PC-9 (cell line): ENCODE measurements at regions of chr5 and their contacts with region 1.

Region 1: DNA sequence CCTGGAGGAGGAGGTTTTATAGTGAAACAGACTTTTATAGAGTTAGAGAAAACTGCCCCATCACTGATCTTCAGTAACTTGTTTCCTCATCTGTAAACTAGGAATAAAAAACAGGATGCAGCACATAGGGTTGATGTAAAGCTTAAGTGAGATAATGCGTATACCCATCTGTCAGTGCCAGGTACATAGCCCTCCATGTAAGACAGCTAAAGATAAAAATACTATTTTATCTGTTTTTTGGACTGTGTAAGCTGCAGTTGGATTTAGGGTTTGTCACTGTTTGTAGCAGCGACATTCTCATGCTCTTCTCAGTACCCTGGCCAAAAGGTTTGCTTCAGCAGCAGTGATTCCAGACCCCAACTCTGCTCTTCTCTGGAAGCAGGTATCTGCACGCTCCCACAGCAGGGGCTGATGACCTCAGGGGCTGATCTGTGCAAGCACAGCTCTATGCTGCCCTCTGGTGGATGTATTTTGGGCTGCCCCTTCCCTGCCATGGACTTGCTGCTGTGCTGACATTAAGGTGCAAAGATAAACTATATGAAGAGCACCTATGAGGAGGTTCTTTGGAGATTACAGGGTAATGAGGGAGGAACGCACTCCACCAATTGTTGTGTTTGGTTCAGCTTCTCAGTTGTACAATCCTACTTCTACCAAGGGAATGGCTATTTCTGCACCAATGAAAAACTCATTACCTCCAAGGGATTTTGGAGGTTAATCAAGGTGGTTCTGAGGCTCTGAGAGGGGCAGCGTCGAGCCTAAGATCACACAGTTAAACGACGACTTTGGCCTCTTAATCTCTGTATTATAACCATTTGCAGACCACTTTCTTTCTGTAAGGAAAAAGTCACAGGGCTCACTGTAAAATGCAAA is 13.1 kb downstream of the HMHB1 start:
- DNase-seq: peak; percentile 42 to 79
- H3K4me3 ChIP-seq: no peak overlapping the region
- H3K27ac ChIP-seq: no peak overlapping the region
- H3K4me1 ChIP-seq: peaks cover 15% of the 10 kb centered on the region
- H3K27me3 ChIP-seq: no peaks in the 10 kb centered on the region
- CTCF ChIP-seq: peak; percentile 97

Region 2: DNA sequence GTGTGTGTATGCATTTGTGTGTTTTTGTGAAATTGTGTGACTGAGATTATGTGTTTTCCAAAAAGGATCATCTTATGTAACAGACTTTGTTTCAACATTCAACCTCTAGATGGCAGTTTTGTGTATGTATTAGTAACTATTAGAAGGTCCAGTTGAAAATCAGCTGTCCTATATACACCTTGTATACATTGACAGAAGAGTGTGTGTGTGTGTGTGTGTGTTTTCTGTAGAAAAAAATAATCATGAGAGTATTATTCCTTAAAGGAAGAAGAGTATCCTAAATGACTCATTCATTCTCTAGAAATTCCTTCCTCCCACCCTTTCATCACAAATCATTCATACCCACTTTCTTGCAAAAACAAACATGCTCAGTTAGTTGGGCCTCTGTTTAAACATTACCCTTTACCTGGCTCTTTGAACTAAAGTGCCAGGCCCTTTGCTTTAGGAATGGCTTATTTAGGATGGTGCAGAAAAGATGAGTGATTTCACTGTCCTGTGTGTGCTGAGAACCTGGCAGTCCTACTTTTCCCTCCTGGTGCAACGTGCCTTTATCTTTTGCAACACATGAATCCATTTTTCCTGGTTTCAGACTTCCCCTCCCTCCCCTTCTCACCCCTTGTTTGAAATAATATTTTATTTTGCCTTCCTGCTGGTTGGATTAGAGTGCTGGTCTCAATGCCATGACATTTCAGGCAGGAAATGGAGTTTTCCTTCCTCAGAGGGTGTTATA is 902.7 kb before region 1 on chr5:
- CTCF ChIA-PET with region 1: interaction called, 5 read pairs
- POLR2A ChIA-PET with region 1: no interaction called
- intact Hi-C with region 1: loop called (anchors 1 kb)
- DNase-seq: peak in 1 of 2 experiments; percentile 67
- H3K4me3 ChIP-seq: no peak overlapping the region
- H3K27ac ChIP-seq: no peak overlapping the region
- H3K4me1 ChIP-seq: peaks cover 11% of the 10 kb centered on the region
- H3K27me3 ChIP-seq: no peaks in the 10 kb centered on the region
- CTCF ChIP-seq: peak; percentile 70

Region 3: DNA sequence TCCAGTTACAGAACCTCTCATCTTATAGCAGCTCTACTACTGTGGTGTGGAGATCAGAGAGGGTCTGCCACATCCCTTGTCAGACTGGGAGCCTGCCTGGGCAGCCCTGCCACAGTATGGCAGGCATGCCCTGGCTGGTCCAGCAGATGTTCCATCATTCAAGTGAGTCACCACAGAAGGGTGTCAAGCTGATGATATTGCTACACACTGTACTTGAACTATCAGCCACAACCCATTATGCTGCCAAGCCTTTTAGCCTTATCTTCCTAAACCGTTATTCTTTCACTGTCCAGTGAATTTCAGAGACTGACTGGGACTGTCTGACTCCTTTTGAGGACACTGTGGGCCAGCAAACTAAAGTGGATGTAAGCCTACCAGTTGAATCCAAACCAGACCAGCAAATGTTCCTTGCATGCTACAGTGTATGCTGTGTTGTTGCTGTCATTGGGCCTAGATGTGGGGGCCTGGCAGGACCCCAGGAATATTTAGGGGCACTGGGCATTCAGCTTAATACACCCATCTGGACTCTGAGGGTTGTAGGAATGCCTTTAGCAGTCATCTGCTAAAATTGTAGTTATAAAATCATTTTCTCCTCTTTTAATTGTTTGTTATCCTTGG is 624.2 kb before region 1 on chr5:
- CTCF ChIA-PET with region 1: no interaction called
- POLR2A ChIA-PET with region 1: no interaction called
- intact Hi-C with region 1: loop called (anchors 10 kb)
- DNase-seq: no peak
- H3K4me3 ChIP-seq: no peak overlapping the region
- H3K27ac ChIP-seq: no peak overlapping the region
- H3K4me1 ChIP-seq: no peaks in the 10 kb centered on the region
- H3K27me3 ChIP-seq: no peaks in the 10 kb centered on the region
- CTCF ChIP-seq: no peak

Region 4: DNA sequence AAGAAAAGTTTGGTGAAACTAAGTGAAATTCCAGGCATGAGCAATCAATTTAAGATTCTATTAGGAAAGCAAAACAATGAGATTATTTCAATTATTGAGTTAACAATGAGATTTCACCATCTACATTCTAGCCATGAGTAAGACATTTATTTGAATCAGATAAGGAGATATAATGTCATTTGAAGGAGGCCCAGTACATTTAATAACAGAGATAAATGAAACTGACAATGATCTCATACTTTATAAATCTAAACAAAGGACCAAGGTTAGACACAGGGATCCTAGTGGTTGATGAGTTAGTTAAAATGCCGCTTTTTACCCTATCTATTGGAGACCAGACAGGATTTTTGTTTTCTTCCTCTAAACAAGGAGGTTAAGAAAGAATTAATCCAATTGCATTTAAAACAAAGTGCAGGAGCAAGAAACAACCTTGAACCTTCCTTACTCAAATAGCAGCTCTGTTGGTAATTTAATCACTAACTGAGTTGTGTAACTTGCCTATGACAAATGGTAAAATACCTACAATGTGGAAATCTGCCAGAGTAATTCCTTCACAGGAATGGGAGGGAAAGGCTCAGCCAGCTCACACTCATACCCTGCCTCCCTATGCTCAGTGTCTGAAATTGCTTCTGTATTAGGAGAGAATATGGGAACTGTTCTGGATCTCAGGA is 318.1 kb before region 1 on chr5:
- CTCF ChIA-PET with region 1: no interaction called
- POLR2A ChIA-PET with region 1: no interaction called
- intact Hi-C with region 1: loop called (anchors 1 kb)
- DNase-seq: peak; percentile 45 to 93
- H3K4me3 ChIP-seq: no peak overlapping the region
- H3K27ac ChIP-seq: peak overlapping the region; percentile 79
- H3K4me1 ChIP-seq: peaks cover 36% of the 10 kb centered on the region
- H3K27me3 ChIP-seq: no peaks in the 10 kb centered on the region
- CTCF ChIP-seq: no peak

Region 5: GRCh38 chr5:143657647-143658285 is 167.3 kb before region 1 on chr5:
- CTCF ChIA-PET with region 1: interaction called, 4 read pairs
- POLR2A ChIA-PET with region 1: no interaction called
- intact Hi-C with region 1: loop called (anchors 10 kb)
- DNase-seq: peak; percentile 34 to 89
- H3K4me3 ChIP-seq: no peak overlapping the region
- H3K27ac ChIP-seq: no peak overlapping the region
- H3K4me1 ChIP-seq: peaks cover 63% of the 10 kb centered on the region
- H3K27me3 ChIP-seq: no peaks in the 10 kb centered on the region
- CTCF ChIP-seq: no peak

Region 6: GRCh38 chr5:143791848-143792731 is 33.0 kb before region 1 on chr5:
- CTCF ChIA-PET with region 1: no interaction called
- POLR2A ChIA-PET with region 1: no interaction called
- intact Hi-C with region 1: no loop called
- DNase-seq: no peak
- H3K4me3 ChIP-seq: no peak overlapping the region
- H3K27ac ChIP-seq: no peak overlapping the region
- H3K4me1 ChIP-seq: no peaks in the 10 kb centered on the region
- H3K27me3 ChIP-seq: no peaks in the 10 kb centered on the region
- CTCF ChIP-seq: no peak

Region 7: DNA sequence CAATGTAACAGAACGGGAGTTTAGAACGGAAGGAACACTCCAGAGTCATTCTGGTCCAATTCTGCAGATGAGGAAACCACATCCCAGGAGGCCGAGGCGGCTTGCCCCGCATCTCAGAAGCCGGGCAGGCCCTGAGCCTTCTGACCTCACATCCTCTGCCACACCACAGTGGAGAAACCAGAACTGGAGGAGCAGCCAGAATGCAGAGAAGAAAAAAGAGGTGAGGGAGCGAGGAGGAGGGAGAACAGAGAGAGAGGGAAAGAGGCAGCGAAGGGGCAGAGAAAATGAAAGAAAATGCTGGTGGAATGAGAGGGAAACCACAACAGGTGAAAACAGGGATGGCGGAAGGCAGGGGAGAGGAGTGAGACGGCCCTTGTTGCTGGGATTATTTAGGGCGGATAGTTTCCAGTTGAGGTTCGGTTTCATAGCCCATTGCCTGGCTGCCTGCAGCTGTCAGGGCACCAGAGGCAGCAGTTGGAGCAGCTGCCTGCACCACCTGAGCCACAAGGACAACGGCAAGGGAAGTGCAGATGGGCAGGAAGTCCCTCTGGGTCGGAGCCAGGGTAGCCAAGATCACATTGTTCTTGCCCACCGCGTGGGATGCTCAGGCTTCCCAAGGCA is 12.9 kb before region 1 on chr5 and contains the start of gene HMHB1:
- CTCF ChIA-PET with region 1: no interaction called
- POLR2A ChIA-PET with region 1: no interaction called
- intact Hi-C with region 1: no loop called
- DNase-seq: no peak
- H3K4me3 ChIP-seq: no peak within 1 kb of the TSS
- H3K27ac ChIP-seq: no peak within 1 kb of the TSS
- H3K4me1 ChIP-seq: no peaks in the 10 kb centered on the region
- H3K27me3 ChIP-seq: no peaks in the 10 kb centered on the region
- CTCF ChIP-seq: no peak
- total RNA-seq, gene HMHB1: not detected in 2 replicates

Region 8: GRCh38 chr5:144142139-144142823 is 317.2 kb after region 1 on chr5:
- CTCF ChIA-PET with region 1: no interaction called
- POLR2A ChIA-PET with region 1: no interaction called
- intact Hi-C with region 1: loop called (anchors 1 kb)
- DNase-seq: peak in 1 of 2 experiments; percentile 11
- H3K4me3 ChIP-seq: no peak overlapping the region
- H3K27ac ChIP-seq: no peak overlapping the region
- H3K4me1 ChIP-seq: 0 out of 2 replicates have a peak, but pooled peaks cover 8% of the 10 kb centered on the region
- H3K27me3 ChIP-seq: no peaks in the 10 kb centered on the region
- CTCF ChIP-seq: peak; percentile 85

Region 9: GRCh38 chr5:144219869-144220268 is 394.8 kb after region 1 on chr5:
- CTCF ChIA-PET with region 1: no interaction called
- POLR2A ChIA-PET with region 1: no interaction called
- intact Hi-C with region 1: no loop called
- DNase-seq: no peak
- H3K4me3 ChIP-seq: no peak overlapping the region
- H3K27ac ChIP-seq: no peak overlapping the region
- H3K4me1 ChIP-seq: no peaks in the 10 kb centered on the region
- H3K27me3 ChIP-seq: peaks cover 18% of the 10 kb centered on the region
- CTCF ChIP-seq: no peak